CD8-positive, alpha-beta T cell (primary cell): ENCODE measurements at regions of chr4 and their contacts with region 1.

Region 1: DNA sequence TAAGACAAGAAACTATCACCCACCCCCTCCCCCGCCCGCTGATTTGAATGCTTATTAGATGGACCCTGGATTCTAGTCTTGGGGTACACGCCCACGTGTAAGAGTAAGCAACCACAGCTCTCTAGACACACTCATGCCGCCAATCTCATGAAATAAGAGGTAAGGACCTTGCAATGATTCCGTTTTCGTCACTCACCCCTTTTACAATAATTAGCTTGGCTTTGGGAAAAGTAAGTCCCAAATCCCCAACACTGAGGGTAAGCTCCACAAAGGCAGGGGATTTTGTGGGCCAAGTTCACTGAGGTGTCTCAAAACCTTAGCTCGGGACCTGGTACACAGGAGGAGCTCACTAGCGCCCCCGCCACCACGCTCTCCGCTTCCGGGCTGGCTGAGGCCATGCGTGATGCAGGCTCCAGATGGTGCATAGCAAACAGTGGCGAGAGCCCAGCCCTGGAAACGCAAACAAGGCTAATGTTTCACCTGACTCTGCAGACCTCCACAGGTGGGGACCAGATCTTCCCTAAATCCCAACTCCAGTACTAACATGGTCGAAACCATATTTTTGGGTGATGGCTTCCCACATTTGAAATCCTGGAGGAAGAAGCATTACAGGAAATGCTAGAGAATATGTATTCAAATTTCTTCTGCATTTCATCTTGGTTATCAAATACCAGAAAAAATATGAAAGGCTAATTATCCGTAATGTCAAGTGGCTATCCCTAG is 4.1 kb downstream of the PLAC8 start:
- DNase-seq: peak; percentile 80 to 94 (median 89)
- ATAC-seq: peak; percentile 74
- H3K4me3 ChIP-seq: peak overlapping the region; percentile 69 to 79
- H3K4me3 Mint-ChIP-seq: peak overlapping the region; percentile 99
- H3K27ac ChIP-seq: peak overlapping the region; percentile 68 to 71
- H3K27ac Mint-ChIP-seq: peak overlapping the region; percentile 97
- H3K4me1 ChIP-seq: peaks cover 36% of the 10 kb centered on the region
- H3K4me1 Mint-ChIP-seq: peaks cover 48% of the 10 kb centered on the region
- H3K27me3 ChIP-seq: no peaks in the 10 kb centered on the region
- H3K27me3 Mint-ChIP-seq: no peaks in the 10 kb centered on the region
- CTCF ChIP-seq: peak; percentile 70

Region 2: DNA sequence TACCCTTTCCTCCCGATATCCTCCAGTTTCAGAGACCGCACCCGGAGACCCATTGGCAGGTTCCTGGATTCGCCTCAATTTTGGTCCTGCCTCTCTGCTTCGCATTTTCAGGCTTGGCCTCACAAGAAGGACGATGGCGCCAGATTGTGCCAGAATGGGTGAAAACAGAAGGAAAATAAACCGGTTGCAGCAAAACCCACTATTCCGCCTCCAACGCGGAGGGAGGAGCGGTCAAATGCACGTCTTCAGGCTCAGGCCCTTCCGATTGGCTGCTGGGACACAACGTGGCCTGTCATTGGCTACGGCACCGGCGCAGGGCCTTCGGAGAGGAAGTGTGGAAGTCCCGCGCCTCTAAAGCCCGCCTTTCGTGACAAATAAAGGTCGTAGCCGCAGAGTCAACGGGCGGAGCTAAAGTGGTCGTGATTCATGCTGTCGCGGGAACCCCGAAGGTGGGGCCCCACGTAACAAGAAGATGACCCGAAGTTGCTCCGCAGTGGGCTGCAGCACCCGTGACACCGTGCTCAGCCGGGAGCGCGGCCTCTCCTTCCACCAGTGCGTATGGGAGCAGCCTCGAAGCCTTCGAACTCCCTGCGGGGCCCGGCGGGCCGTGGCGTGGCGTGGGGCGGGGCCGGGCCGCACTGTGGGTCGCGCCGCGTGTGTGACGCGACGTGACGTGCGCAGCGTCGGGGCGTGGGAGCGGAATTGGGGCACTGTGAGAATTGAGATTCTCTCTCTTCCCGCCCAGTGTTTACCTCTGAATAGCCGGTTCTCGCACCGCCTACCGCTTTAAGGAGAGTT is 209.9 kb before region 1 on chr4 and contains the start of gene THAP9:
- CTCF ChIA-PET with region 1: no interaction called
- POLR2A ChIA-PET with region 1: no interaction called
- intact Hi-C with region 1: loop called in 1 of 2 experiments (anchors 2 kb)
- DNase-seq: peak; percentile 95 to 100 (median 97)
- ATAC-seq: peak; percentile 88
- H3K4me3 ChIP-seq: peak within 1 kb of the TSS; percentile 73 to 84
- H3K4me3 Mint-ChIP-seq: no peak within 1 kb of the TSS
- H3K27ac ChIP-seq: peak within 1 kb of the TSS; percentile 93 to 99
- H3K27ac Mint-ChIP-seq: no peak within 1 kb of the TSS
- H3K4me1 ChIP-seq: peaks cover 30% of the 10 kb centered on the region
- H3K4me1 Mint-ChIP-seq: peaks cover 21% of the 10 kb centered on the region
- H3K27me3 ChIP-seq: no peaks in the 10 kb centered on the region
- H3K27me3 Mint-ChIP-seq: no peaks in the 10 kb centered on the region
- CTCF ChIP-seq: no peak
- total RNA-seq, gene THAP9: 5.2 to 7.3 TPM

Region 3: DNA sequence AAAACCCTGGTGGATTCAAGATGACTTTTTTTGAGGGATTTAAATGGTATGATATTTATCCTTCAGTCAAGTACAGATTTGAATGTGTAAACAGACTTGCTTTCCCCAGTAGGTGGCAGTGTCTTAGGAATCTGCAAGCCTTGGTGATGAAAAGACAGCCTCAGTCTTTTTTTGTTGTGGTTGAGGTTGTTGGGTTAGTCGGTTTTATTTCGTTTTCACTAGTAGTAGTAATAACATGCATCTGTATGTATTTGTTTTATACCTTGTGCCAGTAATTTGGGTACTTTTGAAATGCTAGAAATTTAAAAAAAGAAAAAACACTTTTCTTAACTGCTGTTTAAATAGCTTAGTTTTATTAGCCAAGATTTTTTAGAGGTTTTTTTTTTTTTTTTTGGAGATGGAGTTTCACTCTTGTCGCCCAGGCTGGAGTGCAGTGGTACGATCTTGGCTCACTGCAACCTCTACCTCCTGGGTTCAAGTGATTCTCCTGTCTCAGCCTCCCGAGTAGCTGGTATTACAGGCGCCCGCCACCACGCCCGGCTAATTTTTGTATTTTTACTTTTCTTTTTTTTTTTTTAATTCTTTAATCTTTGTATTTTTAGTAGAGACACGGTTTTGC is 36.2 kb before region 1 on chr4:
- CTCF ChIA-PET with region 1: interaction called, 10 read pairs
- POLR2A ChIA-PET with region 1: interaction called, 4 read pairs
- intact Hi-C with region 1: loop called (anchors 1 to 2 kb)
- DNase-seq: peak in 8 of 9 experiments; percentile 27 to 94 (median 62)
- ATAC-seq: peak; percentile 97
- H3K4me3 ChIP-seq: peak overlapping the region in 1 of 2 experiments; percentile 18
- H3K4me3 Mint-ChIP-seq: peak overlapping the region; percentile 78
- H3K27ac ChIP-seq: peak overlapping the region in 1 of 2 experiments; percentile 2
- H3K27ac Mint-ChIP-seq: peak overlapping the region; percentile 83
- H3K4me1 ChIP-seq: peaks cover 3% of the 10 kb centered on the region
- H3K4me1 Mint-ChIP-seq: peaks cover 4% of the 10 kb centered on the region
- H3K27me3 ChIP-seq: no peaks in the 10 kb centered on the region
- H3K27me3 Mint-ChIP-seq: no peaks in the 10 kb centered on the region
- CTCF ChIP-seq: peak; percentile 83

Region 4: GRCh38 chr4:83093130-83093529 is 17.3 kb before region 1 on chr4:
- CTCF ChIA-PET with region 1: interaction called, 10 read pairs
- POLR2A ChIA-PET with region 1: interaction called, 8 read pairs
- intact Hi-C with region 1: loop called (anchors 2 kb)
- DNase-seq: no peak
- ATAC-seq: no peak
- H3K4me3 ChIP-seq: no peak overlapping the region
- H3K4me3 Mint-ChIP-seq: no peak overlapping the region
- H3K27ac ChIP-seq: peak overlapping the region in 1 of 2 experiments; percentile 31
- H3K27ac Mint-ChIP-seq: peak overlapping the region; percentile 80
- H3K4me1 ChIP-seq: peaks cover 26% of the 10 kb centered on the region
- H3K4me1 Mint-ChIP-seq: peaks cover 53% of the 10 kb centered on the region
- H3K27me3 ChIP-seq: no peaks in the 10 kb centered on the region
- H3K27me3 Mint-ChIP-seq: no peaks in the 10 kb centered on the region
- CTCF ChIP-seq: no peak

Region 5: DNA sequence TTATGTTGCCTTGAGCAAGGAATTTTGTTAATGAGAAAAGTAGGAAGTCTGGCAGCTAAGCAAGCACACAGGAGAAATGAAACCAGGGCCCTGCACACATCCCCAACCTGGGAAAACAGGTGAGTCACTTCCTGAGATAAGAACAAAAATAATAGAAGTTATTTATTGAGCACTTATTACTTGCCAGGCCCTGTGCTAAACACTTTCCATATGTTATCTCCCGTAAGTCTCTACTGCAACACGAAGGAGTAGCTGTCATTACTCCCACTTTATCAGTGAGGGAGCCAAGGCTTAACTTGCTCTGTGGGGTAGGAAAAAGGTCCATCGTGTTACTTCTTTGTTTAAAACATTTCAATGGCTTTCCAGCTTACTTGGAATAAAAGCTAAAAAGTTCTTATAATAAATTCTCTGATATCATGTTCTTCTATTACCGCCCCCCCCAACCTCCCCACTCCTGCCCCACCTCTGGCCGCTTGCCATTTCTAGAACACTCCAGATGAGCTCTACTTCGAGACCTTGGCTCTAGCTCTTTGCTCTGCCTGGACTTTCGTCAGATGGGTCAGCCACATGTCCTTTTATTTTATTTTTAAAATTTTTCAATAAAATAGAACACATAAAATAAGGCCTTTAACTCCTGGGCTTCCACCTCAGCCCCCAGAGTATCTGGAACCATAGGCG is 40.4 kb after region 1 on chr4:
- CTCF ChIA-PET with region 1: interaction called, 16 read pairs
- POLR2A ChIA-PET with region 1: interaction called, 6 read pairs
- intact Hi-C with region 1: loop called (anchors 1 to 2 kb)
- DNase-seq: no peak
- ATAC-seq: no peak
- H3K4me3 ChIP-seq: no peak overlapping the region
- H3K4me3 Mint-ChIP-seq: no peak overlapping the region
- H3K27ac ChIP-seq: no peak overlapping the region
- H3K27ac Mint-ChIP-seq: no peak overlapping the region
- H3K4me1 ChIP-seq: peaks cover 10% of the 10 kb centered on the region
- H3K4me1 Mint-ChIP-seq: peaks cover 30% of the 10 kb centered on the region
- H3K27me3 ChIP-seq: no peaks in the 10 kb centered on the region
- H3K27me3 Mint-ChIP-seq: no peaks in the 10 kb centered on the region
- CTCF ChIP-seq: no peak

Region 6: GRCh38 chr4:83217721-83218522 is 107.5 kb after region 1 on chr4:
- CTCF ChIA-PET with region 1: interaction called, 31 read pairs
- POLR2A ChIA-PET with region 1: interaction called, 52 read pairs
- intact Hi-C with region 1: loop called (anchors 1 to 2 kb)
- DNase-seq: peak; percentile 35 to 94 (median 67)
- ATAC-seq: peak; percentile 93
- H3K4me3 ChIP-seq: no peak overlapping the region
- H3K4me3 Mint-ChIP-seq: peak overlapping the region; percentile 55
- H3K27ac ChIP-seq: peak overlapping the region; percentile 68 to 81
- H3K27ac Mint-ChIP-seq: peak overlapping the region; percentile 89
- H3K4me1 ChIP-seq: peaks cover 66% of the 10 kb centered on the region
- H3K4me1 Mint-ChIP-seq: peaks cover 74% of the 10 kb centered on the region
- H3K27me3 ChIP-seq: no peaks in the 10 kb centered on the region
- H3K27me3 Mint-ChIP-seq: no peaks in the 10 kb centered on the region
- CTCF ChIP-seq: no peak

Region 7: GRCh38 chr4:83259586-83259985 is 149.2 kb after region 1 on chr4:
- CTCF ChIA-PET with region 1: interaction called, 84 read pairs
- POLR2A ChIA-PET with region 1: interaction called, 7 read pairs
- intact Hi-C with region 1: loop called in 1 of 2 experiments (anchors 2 kb)
- DNase-seq: no peak
- ATAC-seq: no peak
- H3K4me3 ChIP-seq: no peak overlapping the region
- H3K4me3 Mint-ChIP-seq: no peak overlapping the region
- H3K27ac ChIP-seq: no peak overlapping the region
- H3K27ac Mint-ChIP-seq: no peak overlapping the region
- H3K4me1 ChIP-seq: peaks cover 6% of the 10 kb centered on the region
- H3K4me1 Mint-ChIP-seq: peaks cover 13% of the 10 kb centered on the region
- H3K27me3 ChIP-seq: no peaks in the 10 kb centered on the region
- H3K27me3 Mint-ChIP-seq: no peaks in the 10 kb centered on the region
- CTCF ChIP-seq: no peak